BJ (cell line): ENCODE measurements at regions of chr16 and their contacts with region 1.

Region 1: GRCh38 chr16:81940781-81941560 is 70.3 kb downstream of the SDR42E1 start:
- DNase-seq: peak; percentile 24
- H3K4me3 ChIP-seq: no peak overlapping the region
- H3K27me3 ChIP-seq: peaks cover 1% of the 10 kb centered on the region
- CTCF ChIP-seq: peak; percentile 52

Region 2: DNA sequence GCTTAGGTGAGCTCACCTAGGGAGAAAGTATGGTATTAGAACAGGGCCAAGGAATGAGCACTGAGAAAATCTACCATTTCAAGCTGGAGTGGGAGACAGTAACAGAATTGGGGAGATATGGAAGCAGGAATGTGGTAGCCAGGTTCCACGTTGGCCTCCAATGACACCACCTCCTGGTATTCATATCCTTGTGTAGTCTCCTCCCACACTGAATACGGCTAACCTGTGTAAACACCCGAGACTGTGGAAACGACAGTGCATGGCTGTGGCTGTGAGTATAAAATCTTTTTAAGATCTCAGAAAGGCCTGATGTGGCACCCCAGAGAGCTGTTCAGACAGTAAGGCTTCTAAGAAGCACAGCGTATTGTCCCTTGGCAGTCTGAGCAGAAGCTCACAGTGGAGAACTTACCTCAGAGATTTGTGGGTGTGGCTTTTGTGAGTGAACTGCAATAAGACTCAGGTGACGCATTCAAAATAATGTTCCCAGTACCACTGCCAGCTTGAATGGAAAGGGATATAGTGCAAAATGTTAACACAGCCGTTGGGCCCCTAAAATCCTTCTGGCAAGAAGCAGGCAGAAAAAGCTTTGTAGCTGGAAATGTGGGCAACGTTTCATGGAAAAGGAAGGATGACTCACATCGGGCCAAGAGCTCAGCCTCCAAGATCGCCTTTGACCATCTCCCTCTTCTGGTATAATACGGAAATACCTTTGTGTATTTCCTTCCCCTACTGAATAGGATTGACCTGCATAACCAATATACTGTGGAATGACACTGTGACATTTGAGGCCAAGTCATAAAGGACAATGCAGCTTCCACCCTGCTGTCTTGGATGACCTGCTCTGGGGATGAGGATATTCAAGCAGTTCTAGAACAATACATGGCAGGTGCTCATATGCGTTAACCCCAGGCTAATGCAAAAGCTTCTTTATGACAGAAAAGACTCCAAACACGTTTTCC is 56.0 kb after region 1 on chr16:
- CTCF ChIA-PET with region 1: interaction called, 16 read pairs
- POLR2A ChIA-PET with region 1: no interaction called
- DNase-seq: peak; percentile 12
- H3K4me3 ChIP-seq: no peak overlapping the region
- H3K27me3 ChIP-seq: no peaks in the 10 kb centered on the region
- CTCF ChIP-seq: peak; percentile 45

Region 3: DNA sequence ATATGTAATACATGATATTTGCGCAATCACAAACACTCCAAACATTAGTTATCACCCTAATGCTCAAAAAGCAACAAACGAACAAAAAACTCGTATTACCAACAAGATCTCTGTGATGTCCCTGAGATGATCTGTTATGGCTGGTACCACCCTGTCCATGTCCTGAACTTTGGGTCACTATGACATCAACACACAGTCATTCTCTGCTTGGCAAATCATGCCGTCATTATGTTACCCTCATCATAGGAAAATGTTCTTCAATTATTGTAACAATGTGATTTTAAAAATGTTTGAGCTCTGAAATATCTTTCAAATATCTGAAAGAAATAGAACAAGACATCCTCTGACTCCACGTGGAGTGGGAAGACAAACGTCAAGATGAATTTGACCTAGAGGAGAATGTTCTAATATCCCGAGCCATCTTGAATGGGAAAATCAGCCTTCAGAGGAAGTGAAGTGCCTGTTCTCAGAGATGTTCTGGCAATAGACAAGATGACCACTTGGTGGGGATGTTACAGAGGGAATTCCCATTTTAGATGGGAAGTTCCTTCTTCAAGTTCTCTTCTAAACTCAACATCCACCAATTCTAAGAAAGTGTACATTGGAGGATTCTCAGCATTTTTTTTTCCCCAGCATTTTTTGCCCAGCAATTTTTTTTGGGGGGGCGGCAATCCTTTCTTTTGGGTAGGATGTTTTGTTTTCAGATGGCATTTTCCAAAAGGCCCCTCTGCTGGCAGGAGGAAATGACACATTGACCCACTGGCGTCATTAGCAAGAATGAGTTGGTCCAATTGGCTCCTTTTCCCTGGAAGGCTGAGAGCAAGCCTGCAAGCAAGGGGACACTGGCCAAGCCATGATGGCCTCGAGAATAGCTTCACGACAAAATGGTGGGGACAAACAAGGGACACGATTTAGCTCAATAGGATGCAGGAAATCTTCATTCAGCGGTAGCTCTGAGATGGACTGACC is 90.4 kb after region 1 on chr16:
- CTCF ChIA-PET with region 1: interaction called, 16 read pairs
- POLR2A ChIA-PET with region 1: no interaction called
- DNase-seq: peak; percentile 41
- H3K4me3 ChIP-seq: no peak overlapping the region
- H3K27me3 ChIP-seq: no peaks in the 10 kb centered on the region
- CTCF ChIP-seq: peak; percentile 77